CD8-positive, alpha-beta T cell (primary cell): ENCODE measurements at regions of chr12 and their contacts with region 1.

Region 1: GRCh38 chr12:67578976-67579661 is 69.4 kb upstream of the DYRK2 start:
- DNase-seq: peak in 6 of 9 experiments; percentile 4 to 71 (median 28)
- ATAC-seq: peak; percentile 78
- H3K4me3 ChIP-seq: peak overlapping the region; percentile 4 to 21
- H3K4me3 Mint-ChIP-seq: peak overlapping the region; percentile 56
- H3K27ac ChIP-seq: peak overlapping the region; percentile 11 to 76
- H3K27ac Mint-ChIP-seq: peak overlapping the region; percentile 69
- H3K4me1 ChIP-seq: peaks cover 34% of the 10 kb centered on the region
- H3K4me1 Mint-ChIP-seq: peaks cover 57% of the 10 kb centered on the region
- H3K27me3 ChIP-seq: no peaks in the 10 kb centered on the region
- H3K27me3 Mint-ChIP-seq: no peaks in the 10 kb centered on the region
- CTCF ChIP-seq: no peak

Region 2: DNA sequence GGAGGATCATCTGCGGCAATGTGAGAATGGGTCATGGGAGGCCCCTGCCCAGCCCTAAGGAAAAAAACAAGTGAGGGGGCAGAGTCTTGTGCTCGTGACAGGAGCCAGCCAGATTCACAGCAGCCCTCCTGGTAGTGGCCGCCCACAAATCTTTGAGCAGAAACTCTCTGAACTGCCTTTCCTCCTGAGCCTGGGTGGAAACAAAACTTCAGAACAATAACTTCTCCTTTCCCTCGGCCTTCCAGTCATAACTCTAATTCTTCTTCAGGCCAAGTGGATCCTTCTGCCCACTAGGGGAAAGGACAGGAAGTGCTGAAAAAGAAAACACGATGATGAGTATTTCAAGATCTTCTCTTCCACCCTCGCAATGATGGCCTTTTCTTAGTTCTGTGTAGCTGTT is 121.3 kb before region 1 on chr12:
- CTCF ChIA-PET with region 1: no interaction called
- POLR2A ChIA-PET with region 1: no interaction called
- intact Hi-C with region 1: loop called in 1 of 2 experiments (anchors 5 kb)
- DNase-seq: no peak
- ATAC-seq: no peak
- H3K4me3 ChIP-seq: no peak overlapping the region
- H3K4me3 Mint-ChIP-seq: no peak overlapping the region
- H3K27ac ChIP-seq: no peak overlapping the region
- H3K27ac Mint-ChIP-seq: no peak overlapping the region
- H3K4me1 ChIP-seq: no peaks in the 10 kb centered on the region
- H3K4me1 Mint-ChIP-seq: peaks cover 12% of the 10 kb centered on the region
- H3K27me3 ChIP-seq: no peaks in the 10 kb centered on the region
- H3K27me3 Mint-ChIP-seq: no peaks in the 10 kb centered on the region
- CTCF ChIP-seq: no peak

Region 3: DNA sequence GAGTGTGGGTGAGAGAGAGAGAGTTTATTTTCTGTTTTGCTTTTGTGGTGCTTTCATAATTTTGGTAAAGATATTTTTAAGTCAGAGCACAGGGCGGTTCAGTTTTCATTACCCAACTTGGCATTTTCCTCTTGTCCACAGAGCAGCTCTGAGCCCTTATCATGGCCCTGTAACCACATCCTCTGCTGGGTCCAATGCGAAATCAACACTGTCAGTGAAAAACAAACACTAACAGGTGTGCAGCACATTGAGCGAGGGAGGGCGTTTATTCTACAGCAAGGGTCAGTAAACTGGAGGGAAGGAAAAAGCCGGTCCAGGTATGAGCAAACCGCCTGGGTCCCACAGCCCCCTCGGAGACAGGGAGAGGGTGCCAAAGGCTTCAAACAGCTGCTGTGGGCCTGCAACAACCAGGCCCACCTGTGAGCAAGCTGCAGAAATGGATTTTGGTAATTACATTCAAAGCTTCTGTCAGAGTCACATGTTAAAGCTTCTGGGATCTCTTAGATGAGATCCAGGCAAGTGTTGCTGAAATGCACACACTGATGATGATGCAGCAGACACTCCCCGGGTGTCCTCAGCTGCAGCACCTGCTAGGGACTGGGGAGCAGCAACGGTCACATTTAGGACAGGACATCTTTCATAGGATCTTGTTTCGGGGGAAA is 63.3 kb before region 1 on chr12:
- CTCF ChIA-PET with region 1: interaction called, 4 read pairs
- POLR2A ChIA-PET with region 1: interaction called, 11 read pairs
- intact Hi-C with region 1: loop called in 1 of 2 experiments (anchors 5 kb)
- DNase-seq: peak in 8 of 9 experiments; percentile 8 to 76 (median 44)
- ATAC-seq: peak; percentile 81
- H3K4me3 ChIP-seq: peak overlapping the region in 1 of 2 experiments; percentile 13
- H3K4me3 Mint-ChIP-seq: peak overlapping the region; percentile 63
- H3K27ac ChIP-seq: peak overlapping the region in 1 of 2 experiments; percentile 63
- H3K27ac Mint-ChIP-seq: peak overlapping the region; percentile 83
- H3K4me1 ChIP-seq: peaks cover 41% of the 10 kb centered on the region
- H3K4me1 Mint-ChIP-seq: peaks cover 54% of the 10 kb centered on the region
- H3K27me3 ChIP-seq: no peaks in the 10 kb centered on the region
- H3K27me3 Mint-ChIP-seq: no peaks in the 10 kb centered on the region
- CTCF ChIP-seq: no peak